Dorsolateral prefrontal cortex (tissue), 120 donors: ENCODE measurements at regions of chr6 and their contacts with region 1.

Region 1: DNA sequence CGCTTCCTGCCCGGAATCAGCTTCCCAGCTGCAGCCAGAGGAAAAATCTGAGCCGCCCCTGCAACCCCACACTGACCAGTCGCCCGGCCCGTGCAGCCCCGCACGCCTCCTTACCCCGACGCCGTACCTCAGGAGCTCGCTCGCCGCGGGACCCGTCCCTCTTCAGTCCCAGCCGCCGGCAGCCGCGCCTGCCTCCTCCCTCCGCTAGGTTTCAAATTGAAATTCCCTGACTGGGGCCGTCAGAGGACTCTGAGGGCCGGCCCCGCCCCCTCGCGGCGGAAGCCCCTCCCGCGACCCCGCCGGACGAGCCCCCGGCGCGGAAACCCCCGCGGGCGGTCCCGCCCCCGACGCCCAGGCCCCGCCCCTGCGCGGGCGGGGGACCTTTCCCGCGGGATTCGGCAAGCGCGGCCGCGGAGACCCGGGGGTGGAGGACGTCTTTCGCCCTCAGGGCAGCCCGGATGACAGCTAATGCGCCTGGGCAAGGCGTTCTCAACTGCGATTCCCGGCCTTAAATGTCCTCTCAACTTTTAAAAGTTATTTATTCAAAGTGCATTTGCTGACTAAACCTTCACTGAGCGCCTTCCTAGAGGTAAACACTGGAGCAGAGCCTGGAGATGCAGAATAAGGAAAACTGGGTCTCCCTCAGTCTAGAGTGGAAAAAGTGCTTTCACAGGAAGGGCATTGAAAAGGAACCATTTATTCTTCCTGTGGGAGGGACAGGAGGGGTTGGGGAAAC is at the start of gene EPB41L2:
- DNase-seq: peak; percentile 52 to 94 (median 82)
- H3K4me3 ChIP-seq: peak within 1 kb of the TSS; percentile 53 to 99 (median 92)
- H3K27ac ChIP-seq: peak within 1 kb of the TSS; percentile 69 to 96 (median 93)
- H3K27me3 ChIP-seq: no peaks in the 10 kb centered on the region
- CTCF ChIP-seq: peak in 35 of 56 donors; percentile 7 to 63 (median 33)
- total RNA-seq, gene EPB41L2: 223 to 458 (median 339) TPM

Region 2: DNA sequence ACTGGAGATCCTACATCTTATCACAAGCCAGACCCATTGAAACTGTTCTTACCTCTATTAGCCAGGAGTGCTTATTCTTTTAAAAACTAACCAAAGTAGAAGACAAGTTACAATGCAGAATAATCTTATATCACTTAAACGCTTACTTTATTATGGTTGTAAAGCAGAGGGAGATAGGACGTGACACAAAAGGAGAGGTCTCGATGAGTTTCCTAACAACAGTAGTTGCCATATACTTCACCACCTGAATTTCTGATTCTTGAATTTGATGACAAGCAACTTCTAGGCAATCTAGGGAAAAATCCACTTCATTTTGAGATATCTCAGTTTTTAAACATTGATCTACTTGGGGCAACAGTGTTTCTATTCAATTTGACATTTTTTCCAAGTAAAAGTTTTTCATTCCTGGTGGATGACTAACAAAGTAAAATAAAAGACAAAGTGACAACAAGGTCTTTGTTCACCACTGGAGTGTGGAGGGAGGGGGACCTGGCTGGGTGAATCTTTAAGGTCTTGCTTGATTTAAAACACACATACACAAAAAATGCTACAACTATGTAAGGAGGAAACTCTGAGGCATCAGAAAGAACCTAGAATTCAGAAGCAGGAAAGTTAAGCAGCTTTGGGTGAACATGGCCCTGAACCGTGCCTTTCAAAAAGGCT is 125.1 kb before region 1 on chr6:
- intact Hi-C with region 1: loop called in 1 of 2 experiments (anchors 5 kb)
- DNase-seq: no peak
- H3K4me3 ChIP-seq: no peak overlapping the region
- H3K27ac ChIP-seq: peak overlapping the region in 33 of 59 donors; percentile 3 to 89 (median 38)
- H3K27me3 ChIP-seq: no peaks in the 10 kb centered on the region
- CTCF ChIP-seq: no peak

Region 3: DNA sequence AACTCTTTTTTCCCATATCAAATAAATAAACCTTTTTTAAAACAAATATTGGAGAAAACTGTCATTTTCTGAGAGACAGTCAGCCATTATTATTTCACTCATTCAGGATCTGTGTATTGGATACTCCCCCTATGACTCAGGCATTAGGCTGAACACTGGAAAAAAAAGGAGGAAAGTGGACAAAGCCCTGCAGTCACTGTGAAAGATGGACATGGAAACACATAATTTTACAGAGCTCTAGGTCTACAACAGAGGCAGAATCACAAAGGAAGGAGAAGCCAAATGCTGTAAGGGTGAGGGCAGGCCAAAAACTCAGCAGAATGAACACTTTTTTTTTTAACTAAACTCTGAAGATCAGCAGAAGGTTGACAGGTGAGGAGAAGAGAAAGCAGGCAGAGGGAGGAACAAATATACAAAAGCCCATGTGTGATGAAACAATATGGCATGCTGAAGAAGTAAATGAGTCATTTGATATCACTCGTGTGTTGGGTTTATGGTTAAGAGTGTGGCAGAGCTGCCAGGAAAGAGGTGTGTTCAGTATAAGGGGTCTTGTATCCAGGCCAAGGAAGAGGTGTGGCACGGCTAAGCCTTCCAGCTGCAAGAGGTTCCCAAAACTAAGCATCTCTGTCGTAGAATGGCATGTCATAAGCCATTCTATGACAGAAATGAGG is 39.2 kb before region 1 on chr6:
- intact Hi-C with region 1: loop called in 1 of 2 experiments (anchors 5 kb)
- DNase-seq: no peak
- H3K4me3 ChIP-seq: no peak overlapping the region
- H3K27ac ChIP-seq: peak overlapping the region in 17 of 59 donors; percentile 9 to 73 (median 38)
- H3K27me3 ChIP-seq: no peaks in the 10 kb centered on the region
- CTCF ChIP-seq: no peak

Region 4: GRCh38 chr6:131135244-131136020 is 72.2 kb after region 1 on chr6 and contains the start of gene AKAP7:
- intact Hi-C with region 1: loop called (anchors 1 to 5 kb)
- DNase-seq: peak; percentile 55 to 88 (median 69)
- H3K4me3 ChIP-seq: peak within 1 kb of the TSS; percentile 57 to 90 (median 79)
- H3K27ac ChIP-seq: peak within 1 kb of the TSS; percentile 87 to 99 (median 97)
- H3K27me3 ChIP-seq: no peaks in the 10 kb centered on the region
- CTCF ChIP-seq: peak in 17 of 56 donors; percentile 4 to 44 (median 12)
- total RNA-seq, gene AKAP7: 19.0 to 54.4 (median 33.0) TPM